GM10248 (cell line): ENCODE measurements at regions of chr6 and their contacts with region 1.

Region 1: DNA sequence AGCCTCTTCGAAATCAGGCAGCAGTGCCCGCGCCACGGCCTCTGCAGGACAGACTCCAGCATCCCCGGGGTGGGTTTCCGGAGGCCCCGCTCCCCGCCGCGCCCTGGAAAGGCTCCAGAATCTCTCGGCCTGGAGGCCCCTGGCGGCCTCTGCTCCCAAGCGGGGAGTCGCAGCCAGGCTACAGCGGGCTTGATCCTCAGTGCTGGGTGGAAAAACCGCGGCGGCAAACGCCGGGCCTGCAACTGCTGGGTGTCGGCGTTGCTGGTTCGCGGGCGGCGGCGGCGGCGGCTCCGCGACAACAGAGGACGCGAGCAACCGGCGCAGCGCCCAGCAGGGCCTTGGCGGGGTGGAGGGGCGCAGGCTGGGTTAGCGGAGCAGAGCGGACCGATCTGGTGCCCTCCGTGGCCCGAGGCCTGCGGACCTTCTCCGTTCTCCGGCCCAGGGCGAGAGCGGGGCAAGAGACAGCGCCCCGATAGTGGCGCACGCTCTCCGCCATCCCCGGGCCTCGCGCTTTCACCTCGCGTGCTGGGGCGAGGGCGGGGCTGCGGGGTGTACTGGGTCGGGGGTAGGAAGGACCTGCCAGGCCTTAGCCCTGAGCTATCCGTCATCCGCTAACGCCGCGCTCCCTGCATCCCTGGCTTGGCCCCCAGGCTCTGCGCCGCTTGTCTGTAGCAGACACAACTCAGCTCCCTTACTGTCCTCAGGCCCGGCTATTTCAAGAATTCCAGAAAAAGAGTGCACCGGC is 3.4 kb upstream of the ZNF292 start:
- DNase-seq: peak; percentile 68
- CTCF ChIP-seq: no peak

Region 2: DNA sequence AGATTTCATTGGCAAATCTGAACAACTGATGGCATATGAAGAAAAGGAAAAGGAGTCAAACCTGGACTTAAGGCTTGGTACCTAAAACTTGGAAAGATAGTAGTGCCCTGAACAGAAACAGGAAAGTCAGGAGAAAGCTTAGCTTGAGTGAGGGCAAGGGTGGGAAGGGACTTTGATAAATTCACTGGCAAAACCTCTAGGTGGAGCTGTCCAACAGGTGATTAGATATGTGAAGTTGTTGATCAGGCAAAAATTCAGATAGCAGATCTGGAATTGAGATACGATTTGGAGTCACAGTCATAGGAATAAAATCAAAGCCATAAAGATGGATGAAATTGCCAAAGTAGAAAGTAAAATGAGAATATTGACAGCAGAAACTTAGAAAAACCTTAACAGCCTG is 12.7 kb before region 1 on chr6:
- CTCF ChIA-PET with region 1: interaction called, 13 read pairs
- POLR2A ChIA-PET with region 1: no interaction called
- DNase-seq: peak; percentile 66
- CTCF ChIP-seq: peak; percentile 71

Region 3: DNA sequence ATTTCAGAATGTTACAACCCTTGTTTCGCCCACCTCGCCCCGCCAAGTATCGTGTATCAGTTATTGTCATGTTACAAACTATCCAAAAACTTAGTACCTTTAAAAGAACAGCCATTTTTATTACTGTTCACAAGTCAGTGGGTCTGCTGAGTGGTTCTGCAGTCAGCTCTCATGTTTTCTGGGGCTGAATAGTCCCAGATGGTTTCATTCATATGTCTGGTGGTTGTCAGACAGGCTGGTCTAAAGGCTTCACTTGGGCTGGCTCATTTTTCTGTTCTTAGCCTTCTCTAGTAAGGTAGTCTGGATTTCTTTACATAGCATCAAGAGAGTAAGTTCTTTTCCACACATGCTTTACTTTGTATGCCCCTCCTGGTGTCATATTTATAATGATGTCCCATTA is 12.1 kb after region 1 on chr6:
- CTCF ChIA-PET with region 1: interaction called, 11 read pairs
- POLR2A ChIA-PET with region 1: no interaction called
- DNase-seq: no peak
- CTCF ChIP-seq: no peak

Region 4: DNA sequence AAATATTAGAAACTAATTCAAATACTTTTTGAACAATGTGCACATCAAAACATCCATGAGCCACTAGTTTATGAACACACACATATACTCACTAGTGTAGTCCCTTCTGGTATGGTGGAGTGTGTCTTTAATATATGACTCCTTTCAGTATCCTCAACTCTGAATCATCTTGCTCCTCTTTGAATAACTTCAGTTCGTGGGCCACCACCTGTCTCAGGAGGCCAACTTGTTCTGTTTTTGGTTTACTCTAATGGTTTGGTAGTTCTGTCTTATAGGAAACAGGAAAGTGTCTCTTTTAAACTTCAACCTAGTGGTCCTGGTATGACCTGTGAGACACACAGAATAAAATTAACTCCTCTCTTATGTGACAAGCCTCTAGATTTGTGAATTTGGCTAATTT is 59.0 kb after region 1 on chr6:
- CTCF ChIA-PET with region 1: no interaction called
- POLR2A ChIA-PET with region 1: no interaction called
- DNase-seq: peak; percentile 54
- CTCF ChIP-seq: no peak

Region 5: GRCh38 chr6:87261534-87261933 is 109.6 kb after region 1 on chr6:
- CTCF ChIA-PET with region 1: no interaction called
- POLR2A ChIA-PET with region 1: no interaction called
- DNase-seq: no peak
- CTCF ChIP-seq: no peak